ENCODE measurements at regions of chr1 and their contacts with region 1.

Region 1: DNA sequence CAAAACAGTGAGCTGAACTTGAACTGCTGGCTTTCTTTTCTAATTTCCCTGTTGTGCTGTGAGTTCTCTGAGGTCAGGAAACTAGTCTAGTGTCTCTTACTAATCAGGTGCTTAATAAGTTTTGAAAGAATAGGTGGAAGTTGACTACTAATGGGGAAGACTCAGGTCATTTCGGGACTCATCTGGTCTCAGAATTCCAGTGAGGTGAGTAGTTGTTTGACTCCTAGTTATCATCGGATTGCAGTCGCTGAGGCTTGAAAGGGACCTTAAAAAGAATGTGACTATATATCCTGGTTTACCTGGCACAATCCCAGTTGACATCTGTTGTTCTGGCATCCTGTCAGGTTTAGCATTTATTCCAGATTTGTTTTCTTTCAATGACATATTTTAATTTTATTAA is 81.4 kb upstream of the SPAG17 start:
- DNase-seq: no peak
- ATAC-seq: no peak

Region 2: DNA sequence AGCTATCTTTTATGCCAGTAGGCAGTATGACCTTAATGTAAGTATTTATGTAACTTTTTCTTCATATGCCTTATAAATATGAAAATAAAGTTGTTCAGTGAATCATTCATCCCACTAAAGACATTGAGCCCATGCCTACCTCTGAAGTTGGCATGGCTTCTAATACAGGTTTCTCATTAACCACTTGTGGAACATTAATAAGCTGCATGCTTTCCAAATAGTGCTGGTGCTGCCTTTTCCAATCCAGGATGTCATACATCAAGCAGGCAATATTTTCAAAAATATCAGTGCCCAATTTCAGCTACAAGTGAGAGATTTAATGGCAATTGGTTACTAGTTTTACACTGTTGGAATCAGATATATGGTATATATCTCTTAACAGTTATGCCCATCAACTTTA is 173.4 kb before region 1 on chr1:
- intact Hi-C with region 1: no loop called
- DNase-seq: no peak
- ATAC-seq: no peak

Region 3: GRCh38 chr1:118360817-118361216 is 94.4 kb after region 1 on chr1:
- intact Hi-C with region 1: loop called (anchors 10 kb)
- DNase-seq: no peak
- ATAC-seq: no peak